ENCODE measurements at regions of chr5 and their contacts with region 1.

Region 1: DNA sequence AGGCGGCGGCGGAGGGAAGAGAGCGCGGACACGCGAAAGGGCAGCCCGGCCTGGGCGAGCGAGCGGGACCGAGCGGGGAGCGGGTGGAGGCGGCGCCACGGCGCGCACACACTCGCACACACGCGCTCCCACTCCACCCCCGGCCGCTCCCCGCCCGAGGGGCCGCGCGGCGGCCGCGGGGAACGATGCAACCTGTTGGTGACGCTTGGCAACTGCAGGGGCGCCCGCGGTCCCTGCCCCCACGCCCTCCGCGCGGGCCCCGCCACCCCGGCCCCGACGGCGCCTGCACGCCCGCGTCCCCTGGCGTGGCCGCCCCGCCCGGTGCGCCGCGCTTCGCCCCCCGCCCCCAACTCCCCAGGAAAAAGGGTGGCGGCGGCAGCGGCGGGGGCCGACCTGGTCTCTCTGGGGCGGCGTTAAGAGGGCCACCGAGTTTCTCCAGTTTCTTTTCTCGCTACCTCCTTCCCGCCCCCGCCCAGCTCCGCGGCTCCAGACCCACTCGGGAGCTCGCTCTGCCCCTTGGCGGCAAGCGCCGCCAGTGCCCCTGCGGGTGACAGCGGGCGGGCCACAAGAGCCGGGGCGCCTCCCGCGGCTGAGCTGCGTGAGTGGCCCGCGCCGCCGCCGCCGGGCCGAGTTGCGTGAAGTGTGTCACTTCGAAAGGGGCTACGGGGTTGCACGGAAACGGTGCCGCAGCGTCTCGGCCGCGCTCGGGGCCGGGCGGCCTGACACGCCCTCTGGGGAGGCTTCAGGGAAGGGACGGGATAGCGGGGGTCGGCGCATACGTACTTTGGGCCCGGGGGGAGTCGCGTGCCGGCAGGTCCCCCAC is at the start of gene NR3C1:
- DNase-seq: peak; percentile 50 to 87
- ATAC-seq: peak; percentile 63 to 66
- H3K4me3 ChIP-seq: peak within 1 kb of the TSS; percentile 86
- H3K27ac ChIP-seq: peak within 1 kb of the TSS; percentile 96 to 99
- H3K4me1 ChIP-seq: no peaks in the 10 kb centered on the region
- CTCF ChIP-seq: peak; percentile 63
- EP300 ChIP-seq: peak in 1 of 2 experiments; percentile 34; a peak in 1 of 5 replicates
- POLR2A ChIP-seq: peak; percentile 52
- RAD21 ChIP-seq: peak; percentile 42 to 77
- polyA plus RNA-seq, gene NR3C1: 73.0 and 79.5 TPM in 2 replicates

Region 2: DNA sequence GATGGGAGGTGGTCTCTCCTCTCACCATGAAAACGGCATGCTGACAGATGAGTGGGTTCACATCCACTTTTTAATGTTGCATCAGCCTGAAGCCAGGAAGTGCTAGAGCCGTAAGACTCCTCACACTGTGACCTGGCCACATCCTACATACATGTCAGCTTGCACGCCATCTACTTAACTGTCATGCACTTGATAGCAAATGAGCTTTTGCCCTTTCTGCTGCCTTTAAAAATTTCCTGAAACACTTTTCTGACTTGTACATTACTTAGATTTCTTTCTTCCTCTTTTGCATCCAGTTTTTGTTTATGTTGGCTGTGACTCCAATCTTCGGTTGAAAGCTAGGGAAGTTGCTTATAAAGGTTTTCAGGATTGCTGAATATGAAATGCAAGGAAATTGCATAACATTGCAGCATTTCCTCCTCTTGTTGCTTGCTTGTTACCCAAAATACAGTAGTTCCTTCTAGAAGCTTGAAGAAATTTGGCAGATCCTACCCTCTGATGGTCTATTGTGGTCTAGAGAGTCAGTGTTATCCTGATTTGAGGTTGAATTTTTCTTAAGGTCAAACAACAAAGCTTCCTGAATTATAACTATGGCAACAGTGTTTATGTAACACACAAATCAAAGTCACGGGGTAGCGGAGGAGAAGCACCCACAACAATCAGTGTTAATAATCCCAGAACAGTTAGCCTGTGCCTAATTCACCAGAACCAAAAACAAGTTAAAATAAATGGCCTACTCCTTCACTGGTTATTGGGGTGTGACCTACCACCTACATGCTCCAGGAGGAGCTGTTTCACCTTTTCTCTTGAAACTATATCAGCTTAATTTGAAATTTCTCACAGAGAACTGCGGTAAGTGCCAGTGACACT is 401.1 kb before region 1 on chr5:
- CTCF ChIA-PET with region 1: interaction called, 11 read pairs
- POLR2A ChIA-PET with region 1: interaction called, 7 read pairs
- DNase-seq: peak; percentile 55 to 57
- ATAC-seq: peak; percentile 75 to 86; a peak in 4 of 6 replicates
- H3K4me3 ChIP-seq: no peak overlapping the region
- H3K27ac ChIP-seq: peak overlapping the region; percentile 52 to 62
- H3K4me1 ChIP-seq: peaks cover 22% of the 10 kb centered on the region
- CTCF ChIP-seq: peak; percentile 56
- EP300 ChIP-seq: no peak
- POLR2A ChIP-seq: no peak
- RAD21 ChIP-seq: peak; percentile 77 to 83

Region 3: DNA sequence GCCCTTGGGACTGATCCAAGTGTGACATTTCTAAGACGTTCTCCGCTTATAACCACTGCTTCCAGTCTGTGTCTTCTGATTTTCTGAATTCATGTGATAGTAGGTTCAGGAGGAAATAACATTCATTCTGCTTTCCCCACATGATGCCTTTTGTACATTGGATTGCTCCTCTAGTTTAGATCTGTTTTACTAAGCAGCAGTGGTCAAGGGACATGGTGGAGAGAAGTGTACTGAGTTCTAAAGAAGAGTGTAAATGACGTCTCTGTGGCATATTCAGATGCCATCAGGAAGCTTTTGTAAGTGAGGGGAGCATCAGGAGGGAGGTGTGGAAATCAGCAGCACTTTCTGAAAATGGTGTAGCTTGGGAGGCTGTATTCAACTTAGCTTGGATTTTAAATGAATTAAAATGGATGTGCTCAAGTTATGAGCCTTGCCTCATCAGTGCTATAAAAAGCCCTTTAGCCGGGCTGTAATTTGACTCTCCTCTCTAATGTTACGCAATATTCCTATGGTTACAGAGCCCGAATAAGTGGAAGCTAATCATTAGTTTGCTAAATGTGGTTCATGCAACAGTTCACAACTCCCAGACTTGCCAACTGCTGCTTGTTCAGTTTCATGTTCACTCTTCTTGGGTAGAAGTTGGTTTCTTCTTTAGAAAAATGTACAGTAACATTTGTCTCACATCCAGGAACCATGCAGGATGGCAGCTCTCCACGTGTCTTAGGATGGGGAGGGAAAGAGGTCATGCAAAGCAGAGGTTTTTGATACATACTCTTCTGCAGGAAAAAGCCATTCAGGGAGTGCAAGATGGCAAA is 352.4 kb before region 1 on chr5:
- CTCF ChIA-PET with region 1: no interaction called
- POLR2A ChIA-PET with region 1: no interaction called
- DNase-seq: no peak
- ATAC-seq: peak; percentile 24 to 35; a peak in 2 of 6 replicates
- H3K4me3 ChIP-seq: no peak overlapping the region
- H3K27ac ChIP-seq: peak overlapping the region in 1 of 2 experiments; percentile 44; a peak in 3 of 6 replicates
- H3K4me1 ChIP-seq: peaks cover 24% of the 10 kb centered on the region
- CTCF ChIP-seq: no peak
- EP300 ChIP-seq: no peak
- POLR2A ChIP-seq: no peak
- RAD21 ChIP-seq: no peak

Region 4: DNA sequence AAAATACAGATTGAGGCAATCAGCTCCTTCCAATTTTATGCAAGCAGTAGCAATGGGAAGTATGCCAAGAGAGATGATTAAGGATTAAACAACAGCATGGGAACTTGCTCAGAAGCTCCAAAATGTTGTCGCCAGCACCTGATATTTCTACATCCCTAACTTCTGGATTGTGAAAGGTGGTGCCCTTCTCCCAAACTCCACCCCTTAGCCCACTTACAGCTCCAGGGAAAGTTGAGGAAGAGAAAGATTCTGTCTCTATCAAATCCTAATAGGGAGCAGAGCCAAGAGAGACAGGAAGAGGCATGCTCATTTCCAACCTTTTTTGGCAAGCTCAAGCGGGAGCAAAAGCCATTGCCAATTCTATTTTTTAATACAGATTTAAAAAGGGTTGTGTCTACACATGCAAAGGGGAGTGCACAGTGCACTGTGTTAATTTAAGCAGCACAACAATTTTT is 92.0 kb after region 1 on chr5:
- CTCF ChIA-PET with region 1: interaction called, 10 read pairs
- POLR2A ChIA-PET with region 1: interaction called, 25 read pairs
- DNase-seq: peak; percentile 13 to 89
- ATAC-seq: peak; percentile 61 to 76
- H3K4me3 ChIP-seq: no peak overlapping the region
- H3K27ac ChIP-seq: peak overlapping the region; percentile 81 to 90
- H3K4me1 ChIP-seq: peaks cover 73% of the 10 kb centered on the region
- CTCF ChIP-seq: no peak
- EP300 ChIP-seq: peak; percentile 69 to 87; a peak in 3 of 5 replicates
- POLR2A ChIP-seq: no peak
- RAD21 ChIP-seq: peak in 1 of 2 experiments; percentile 37; a peak in 2 of 5 replicates

Region 5: DNA sequence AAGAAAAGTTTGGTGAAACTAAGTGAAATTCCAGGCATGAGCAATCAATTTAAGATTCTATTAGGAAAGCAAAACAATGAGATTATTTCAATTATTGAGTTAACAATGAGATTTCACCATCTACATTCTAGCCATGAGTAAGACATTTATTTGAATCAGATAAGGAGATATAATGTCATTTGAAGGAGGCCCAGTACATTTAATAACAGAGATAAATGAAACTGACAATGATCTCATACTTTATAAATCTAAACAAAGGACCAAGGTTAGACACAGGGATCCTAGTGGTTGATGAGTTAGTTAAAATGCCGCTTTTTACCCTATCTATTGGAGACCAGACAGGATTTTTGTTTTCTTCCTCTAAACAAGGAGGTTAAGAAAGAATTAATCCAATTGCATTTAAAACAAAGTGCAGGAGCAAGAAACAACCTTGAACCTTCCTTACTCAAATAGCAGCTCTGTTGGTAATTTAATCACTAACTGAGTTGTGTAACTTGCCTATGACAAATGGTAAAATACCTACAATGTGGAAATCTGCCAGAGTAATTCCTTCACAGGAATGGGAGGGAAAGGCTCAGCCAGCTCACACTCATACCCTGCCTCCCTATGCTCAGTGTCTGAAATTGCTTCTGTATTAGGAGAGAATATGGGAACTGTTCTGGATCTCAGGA is 103.2 kb after region 1 on chr5:
- CTCF ChIA-PET with region 1: interaction called, 14 read pairs
- POLR2A ChIA-PET with region 1: interaction called, 33 read pairs
- DNase-seq: peak; percentile 65 to 96
- ATAC-seq: peak; percentile 94 to 97
- H3K4me3 ChIP-seq: peak overlapping the region; percentile 16; the same call in 1 of the 3 replicates
- H3K27ac ChIP-seq: peak overlapping the region; percentile 96
- H3K4me1 ChIP-seq: peaks cover 50% of the 10 kb centered on the region
- CTCF ChIP-seq: peak; percentile 35; the same call in 2 of the 3 replicates
- EP300 ChIP-seq: peak; percentile 84 to 94; a peak in 3 of 5 replicates
- POLR2A ChIP-seq: no peak
- RAD21 ChIP-seq: peak; percentile 65 to 76; a peak in 4 of 5 replicates

Region 6: GRCh38 chr5:143592648-143593047 is 188.8 kb after region 1 on chr5:
- CTCF ChIA-PET with region 1: interaction called, 9 read pairs
- POLR2A ChIA-PET with region 1: interaction called, 17 read pairs
- DNase-seq: peak in 1 of 2 experiments; percentile 45
- ATAC-seq: no peak
- H3K4me3 ChIP-seq: no peak overlapping the region
- H3K27ac ChIP-seq: peak overlapping the region; percentile 94 to 98
- H3K4me1 ChIP-seq: peaks cover 52% of the 10 kb centered on the region
- CTCF ChIP-seq: no peak
- EP300 ChIP-seq: no peak
- POLR2A ChIP-seq: no peak
- RAD21 ChIP-seq: no peak